Ascending aorta (tissue), 2 donors: ENCODE measurements at regions of chr9 and their contacts with region 1.

Region 1: GRCh38 chr9:128094166-128094967 is 26.3 kb downstream of the SLC25A25 start:
- DNase-seq: peak; percentile 87 to 98
- H3K4me3 ChIP-seq: peak overlapping the region; percentile 18 to 35
- H3K27ac ChIP-seq: peak overlapping the region; percentile 90 to 91
- H3K4me1 ChIP-seq: peaks cover 28 to 59% of the 10 kb centered on the region in 2 donors
- H3K27me3 ChIP-seq: no peaks in the 10 kb centered on the region
- CTCF ChIP-seq: no peak

Region 2: GRCh38 chr9:127963359-127964064 is 130.9 kb before region 1 on chr9:
- intact Hi-C with region 1: loop called (anchors 2 kb)
- DNase-seq: no peak
- H3K4me3 ChIP-seq: no peak overlapping the region
- H3K27ac ChIP-seq: peak overlapping the region; percentile 97 to 98
- H3K4me1 ChIP-seq: peaks cover 21 to 63% of the 10 kb centered on the region in 2 donors
- H3K27me3 ChIP-seq: no peaks in the 10 kb centered on the region
- CTCF ChIP-seq: no peak

Region 3: GRCh38 chr9:128007566-128008138 is 86.7 kb before region 1 on chr9:
- intact Hi-C with region 1: no loop called
- DNase-seq: peak in 1 of 2 donors; percentile 75
- H3K4me3 ChIP-seq: no peak overlapping the region
- H3K27ac ChIP-seq: no peak overlapping the region
- H3K4me1 ChIP-seq: no peaks in the 10 kb centered on the region
- H3K27me3 ChIP-seq: no peaks in the 10 kb centered on the region
- CTCF ChIP-seq: no peak

Region 4: DNA sequence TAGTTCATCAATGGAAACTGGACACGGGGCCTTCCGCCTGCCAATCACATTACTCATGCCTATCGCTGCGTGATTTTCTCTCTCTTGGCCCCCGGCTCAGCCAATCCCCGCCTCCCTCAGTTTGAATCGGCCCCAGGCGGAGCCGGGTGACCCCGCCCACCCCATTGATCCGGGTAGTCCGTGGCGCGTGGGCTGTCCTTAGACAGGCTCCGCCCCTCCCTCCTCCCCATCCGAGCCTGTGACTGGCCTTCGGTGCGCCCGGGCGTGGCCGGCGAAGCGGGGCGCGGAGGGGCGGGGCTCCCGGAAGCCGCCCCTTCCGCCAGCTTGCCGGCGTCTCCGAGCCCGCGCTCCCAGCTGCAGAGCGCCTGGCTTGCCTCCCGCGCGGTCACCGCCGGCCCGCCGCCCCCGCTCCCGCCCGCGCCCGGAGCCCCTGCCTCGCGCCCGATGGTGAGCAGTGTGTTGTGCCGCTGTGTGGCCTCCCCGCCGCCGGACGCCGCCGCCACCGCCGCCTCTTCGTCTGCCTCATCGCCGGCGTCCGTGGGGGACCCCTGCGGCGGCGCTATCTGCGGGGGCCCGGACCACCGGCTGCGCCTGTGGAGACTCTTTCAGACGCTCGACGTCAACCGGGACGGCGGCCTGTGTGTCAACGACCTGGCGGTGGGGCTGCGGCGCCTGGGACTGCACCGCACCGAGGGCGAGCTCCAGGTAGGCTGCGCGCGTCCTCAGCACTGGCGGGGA is 26.3 kb before region 1 on chr9 and contains the start of gene SLC25A25:
- intact Hi-C with region 1: loop called (anchors 1 kb)
- DNase-seq: peak; percentile 100
- H3K4me3 ChIP-seq: peak within 1 kb of the TSS; percentile 91 to 98
- H3K27ac ChIP-seq: peak within 1 kb of the TSS; percentile 95 to 99
- H3K4me1 ChIP-seq: peaks cover 22 to 39% of the 10 kb centered on the region in 2 donors
- H3K27me3 ChIP-seq: no peaks in the 10 kb centered on the region
- CTCF ChIP-seq: no peak
- total RNA-seq, gene SLC25A25: 27.4 TPM